ENCODE measurements at regions of chr20 and their contacts with region 1.

Region 1: DNA sequence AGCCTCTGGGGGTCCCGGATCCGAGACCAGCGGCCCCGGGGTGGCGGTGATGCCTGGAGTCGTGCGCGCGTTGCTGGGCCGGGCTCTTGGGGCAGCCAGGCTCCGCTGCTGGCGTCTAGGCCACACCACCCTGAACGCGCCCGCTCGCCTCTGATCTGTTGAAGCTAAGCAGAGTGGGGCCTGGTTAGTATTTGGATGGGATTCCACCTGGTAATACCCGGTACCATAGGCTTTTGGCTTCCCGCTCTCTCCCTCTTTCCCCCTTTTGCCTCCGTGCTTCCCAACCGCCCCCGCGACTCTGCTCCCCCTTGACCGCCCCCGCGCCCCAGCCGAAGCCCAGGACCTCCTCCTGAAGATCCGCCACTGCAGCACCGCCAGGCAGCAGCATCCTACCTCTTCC is 1383.5 kb upstream of the DEFB115 start:
- H3K4me3 Mint-ChIP-seq: no peak overlapping the region
- H3K27ac Mint-ChIP-seq: no peak overlapping the region
- H3K4me1 Mint-ChIP-seq: no peaks in the 10 kb centered on the region
- H3K27me3 Mint-ChIP-seq: peaks cover 4% of the 10 kb centered on the region

Region 2: DNA sequence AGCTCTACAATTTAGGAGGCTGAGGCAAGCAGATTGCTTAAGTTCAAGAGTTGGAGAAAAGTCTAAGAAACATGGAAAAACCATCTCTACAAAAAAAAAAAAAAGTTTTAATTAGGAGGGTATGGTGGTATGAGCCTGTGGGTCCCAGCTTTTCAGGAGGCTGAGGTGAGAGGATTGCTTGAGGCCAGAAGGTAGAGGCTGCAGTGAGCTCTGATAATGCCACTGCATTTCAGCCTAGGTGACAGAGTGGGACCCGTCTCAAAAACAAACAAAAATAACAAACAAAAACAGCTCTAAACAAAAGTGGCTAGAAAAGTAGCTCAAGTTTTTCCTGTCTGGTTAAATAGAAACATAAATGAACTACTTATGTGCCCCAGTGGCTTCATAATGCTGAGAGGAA is 750.1 kb before region 1 on chr20:
- intact Hi-C with region 1: loop called (anchors 5 kb)
- H3K4me3 Mint-ChIP-seq: no peak overlapping the region
- H3K27ac Mint-ChIP-seq: no peak overlapping the region
- H3K4me1 Mint-ChIP-seq: no peaks in the 10 kb centered on the region
- H3K27me3 Mint-ChIP-seq: no peaks in the 10 kb centered on the region

Measured in dendritic cell treated with granulocyte-macrophage colony-stimulating factor and Interleukin-4, amounts not matched to agents 40 ng/mL and 50 ng/mL, for 4 days (primary cell).